Endothelial cell of umbilical vein (primary cell): ENCODE measurements at regions of chr11 and their contacts with region 1.

Region 1: GRCh38 chr11:7577291-7578190 is 63.7 kb downstream of the PPFIBP2 start:
- DNase-seq: peak; percentile 57
- H3K4me3 ChIP-seq: no peak overlapping the region
- H3K27ac ChIP-seq: no peak overlapping the region
- H3K4me1 ChIP-seq: peaks cover 12% of the 10 kb centered on the region
- H3K27me3 ChIP-seq: peaks cover 37 to 57% of the 10 kb centered on the region in 2 experiments
- CTCF ChIP-seq: no peak
- POLR2A ChIP-seq: no peak

Region 2: DNA sequence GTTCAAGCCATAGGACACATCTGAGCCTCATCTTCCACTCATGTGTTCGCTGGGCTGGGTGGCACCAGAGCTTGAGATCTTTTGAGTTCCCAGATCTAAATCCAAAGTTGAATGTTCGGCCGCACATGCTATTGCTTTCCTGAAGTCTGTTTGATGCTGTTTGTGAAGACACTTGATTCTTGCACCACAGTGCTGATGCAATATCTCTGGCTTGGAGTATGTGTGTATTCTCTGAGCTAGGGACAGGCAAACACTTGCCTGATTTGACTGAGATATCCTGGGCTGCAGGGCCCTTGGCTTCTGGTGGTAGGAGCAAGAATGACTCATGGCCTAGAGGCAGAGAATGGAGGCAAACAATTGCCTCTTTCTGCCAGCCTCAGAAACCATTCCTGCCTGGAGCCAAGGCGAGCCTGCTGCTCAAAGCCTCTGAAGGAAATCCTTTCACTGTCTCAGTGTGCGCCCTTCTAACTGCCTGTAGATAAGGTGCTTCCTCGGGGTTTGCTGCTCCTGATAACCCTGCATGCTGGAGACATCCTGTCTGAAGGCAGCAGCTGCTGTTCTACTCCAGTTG is 22.7 kb after region 1 on chr11:
- CTCF ChIA-PET with region 1: interaction called, 41 read pairs
- POLR2A ChIA-PET with region 1: no interaction called
- dilution Hi-C with region 1: no loop called
- intact Hi-C with region 1: loop called (anchors 1 kb)
- DNase-seq: peak; percentile 92
- H3K4me3 ChIP-seq: no peak overlapping the region
- H3K27ac ChIP-seq: peak overlapping the region; percentile 52
- H3K4me1 ChIP-seq: peaks cover 36% of the 10 kb centered on the region
- H3K27me3 ChIP-seq: no peaks in the 10 kb centered on the region
- CTCF ChIP-seq: no peak
- POLR2A ChIP-seq: peak; percentile 79